Panc1 (cell line): ENCODE measurements at regions of chr11 and their contacts with region 1.

Region 1: GRCh38 chr11:76491656-76492055 is 46.8 kb downstream of the EMSY start:
- DNase-seq: no peak
- ATAC-seq: peak; percentile 45; the same call in 1 of the 2 replicates
- H3K4me3 ChIP-seq: no peak overlapping the region
- H3K27ac ChIP-seq: no peak overlapping the region
- H3K4me1 ChIP-seq: no peaks in the 10 kb centered on the region
- H3K27me3 ChIP-seq: no peaks in the 10 kb centered on the region
- CTCF ChIP-seq: no peak

Region 2: GRCh38 chr11:76361374-76361773 is 130.3 kb before region 1 on chr11:
- CTCF ChIA-PET with region 1: interaction called, 20 read pairs
- POLR2A ChIA-PET with region 1: no interaction called
- in situ Hi-C with region 1: no loop called
- intact Hi-C with region 1: no loop called
- DNase-seq: no peak
- ATAC-seq: no peak
- H3K4me3 ChIP-seq: no peak overlapping the region
- H3K27ac ChIP-seq: no peak overlapping the region
- H3K4me1 ChIP-seq: no peaks in the 10 kb centered on the region; the same call in 1 of the 2 replicates
- H3K27me3 ChIP-seq: no peaks in the 10 kb centered on the region
- CTCF ChIP-seq: no peak

Region 3: DNA sequence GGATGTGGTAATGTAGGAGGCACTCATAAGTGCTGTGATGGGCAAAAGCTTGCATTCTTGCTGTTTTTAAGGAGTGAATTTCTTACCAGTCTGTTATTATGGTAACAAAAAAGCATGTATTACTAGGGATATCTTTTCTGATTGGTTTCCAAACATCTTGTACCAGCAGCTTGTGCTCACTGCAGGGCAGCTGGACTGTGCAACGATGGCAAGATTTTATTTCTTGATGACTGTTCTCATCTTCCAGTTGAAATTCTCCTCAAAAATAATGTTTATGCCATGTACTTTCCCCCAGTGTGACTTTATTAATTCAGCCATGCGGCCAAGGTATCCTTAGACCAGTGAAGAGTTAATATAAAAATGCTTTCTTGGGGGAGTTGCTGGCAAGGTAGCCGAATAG is 11.4 kb before region 1 on chr11:
- CTCF ChIA-PET with region 1: no interaction called
- POLR2A ChIA-PET with region 1: no interaction called
- in situ Hi-C with region 1: no loop called
- intact Hi-C with region 1: no loop called
- DNase-seq: no peak
- ATAC-seq: no peak
- H3K4me3 ChIP-seq: no peak overlapping the region
- H3K27ac ChIP-seq: no peak overlapping the region
- H3K4me1 ChIP-seq: no peaks in the 10 kb centered on the region
- H3K27me3 ChIP-seq: no peaks in the 10 kb centered on the region
- CTCF ChIP-seq: no peak

Region 4: GRCh38 chr11:76524919-76525318 is 33.3 kb after region 1 on chr11:
- CTCF ChIA-PET with region 1: interaction called, 13 read pairs
- POLR2A ChIA-PET with region 1: no interaction called
- in situ Hi-C with region 1: no loop called
- intact Hi-C with region 1: no loop called
- DNase-seq: no peak
- ATAC-seq: peak; percentile 79
- H3K4me3 ChIP-seq: no peak overlapping the region
- H3K27ac ChIP-seq: no peak overlapping the region
- H3K4me1 ChIP-seq: no peaks in the 10 kb centered on the region
- H3K27me3 ChIP-seq: no peaks in the 10 kb centered on the region
- CTCF ChIP-seq: no peak